Activated naive CD4-positive, alpha-beta T cell treated with anti-CD3 and anti-CD28 coated beads, Interleukin-2, amount 10 ng/mL, durations not matched to agents 7 days and 5 days (primary cell): ENCODE measurements at regions of chr11 and their contacts with region 1.

Region 1: DNA sequence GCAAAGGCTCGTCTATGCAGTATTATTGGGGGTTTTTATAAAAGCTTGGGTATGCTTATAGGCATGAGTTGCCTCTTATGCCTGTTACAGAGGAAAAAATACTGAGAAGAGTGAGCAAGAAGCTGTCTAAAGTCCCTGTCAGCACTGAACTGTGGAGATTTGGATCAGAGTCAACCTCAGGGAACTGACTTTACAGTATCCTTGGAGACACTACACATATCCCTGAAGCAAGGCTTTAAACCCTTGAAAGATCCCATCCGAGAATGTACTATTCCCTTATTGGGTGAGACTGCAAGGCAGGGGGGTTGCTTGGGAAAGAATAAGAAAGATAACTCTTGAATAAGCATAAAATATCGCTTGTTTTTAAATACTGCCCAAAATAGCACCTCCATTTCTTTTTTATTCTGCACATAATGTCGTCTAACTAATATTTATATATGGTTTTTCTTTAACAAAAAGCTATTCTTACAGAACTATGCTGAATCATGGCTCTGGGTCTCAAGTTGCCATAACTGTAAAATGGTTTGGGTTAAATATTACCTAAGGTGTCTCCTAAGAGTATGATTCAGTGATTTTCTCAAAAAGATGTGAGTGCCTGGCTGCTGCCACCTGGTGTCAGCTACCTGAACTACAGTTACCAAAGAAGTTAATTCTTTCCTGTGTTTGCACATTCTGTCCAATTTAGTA is 1062.8 kb downstream of the DLG2 start:
- DNase-seq: peak; percentile 29
- H3K4me3 Mint-ChIP-seq: no peak overlapping the region
- H3K27ac Mint-ChIP-seq: no peak overlapping the region
- H3K4me1 Mint-ChIP-seq: no peaks in the 10 kb centered on the region
- H3K27me3 Mint-ChIP-seq: no peaks in the 10 kb centered on the region

Region 2: GRCh38 chr11:83836883-83837654 is 727.3 kb before region 1 on chr11:
- CTCF ChIA-PET with region 1: interaction called, 17 read pairs
- DNase-seq: peak; percentile 23
- H3K4me3 Mint-ChIP-seq: no peak overlapping the region
- H3K27ac Mint-ChIP-seq: no peak overlapping the region
- H3K4me1 Mint-ChIP-seq: no peaks in the 10 kb centered on the region
- H3K27me3 Mint-ChIP-seq: peaks cover 6% of the 10 kb centered on the region